ENCODE measurements at regions of chr11 and their contacts with region 1.

Region 1: GRCh38 chr11:695538-696248 is at the start of gene TMEM80:
- DNase-seq: peak; percentile 97 to 99 (median 99)
- H3K4me3 ChIP-seq: peak within 1 kb of the TSS; percentile 69 to 82
- H3K4me3 Mint-ChIP-seq: peak within 1 kb of the TSS; percentile 87 to 90 (median 88)
- H3K27ac ChIP-seq: peak within 1 kb of the TSS; percentile 98
- H3K27ac Mint-ChIP-seq: peak within 1 kb of the TSS; percentile 91 to 97 (median 95)
- H3K4me1 ChIP-seq: peaks cover 57% of the 10 kb centered on the region
- H3K4me1 Mint-ChIP-seq: peaks cover 31 to 58% (median 46%) of the 10 kb centered on the region in 4 donors
- H3K27me3 ChIP-seq: no peaks in the 10 kb centered on the region
- H3K27me3 Mint-ChIP-seq: no peaks in the 10 kb centered on the region
- total RNA-seq, gene TMEM80: 44.7 to 47.3 TPM

Region 2: DNA sequence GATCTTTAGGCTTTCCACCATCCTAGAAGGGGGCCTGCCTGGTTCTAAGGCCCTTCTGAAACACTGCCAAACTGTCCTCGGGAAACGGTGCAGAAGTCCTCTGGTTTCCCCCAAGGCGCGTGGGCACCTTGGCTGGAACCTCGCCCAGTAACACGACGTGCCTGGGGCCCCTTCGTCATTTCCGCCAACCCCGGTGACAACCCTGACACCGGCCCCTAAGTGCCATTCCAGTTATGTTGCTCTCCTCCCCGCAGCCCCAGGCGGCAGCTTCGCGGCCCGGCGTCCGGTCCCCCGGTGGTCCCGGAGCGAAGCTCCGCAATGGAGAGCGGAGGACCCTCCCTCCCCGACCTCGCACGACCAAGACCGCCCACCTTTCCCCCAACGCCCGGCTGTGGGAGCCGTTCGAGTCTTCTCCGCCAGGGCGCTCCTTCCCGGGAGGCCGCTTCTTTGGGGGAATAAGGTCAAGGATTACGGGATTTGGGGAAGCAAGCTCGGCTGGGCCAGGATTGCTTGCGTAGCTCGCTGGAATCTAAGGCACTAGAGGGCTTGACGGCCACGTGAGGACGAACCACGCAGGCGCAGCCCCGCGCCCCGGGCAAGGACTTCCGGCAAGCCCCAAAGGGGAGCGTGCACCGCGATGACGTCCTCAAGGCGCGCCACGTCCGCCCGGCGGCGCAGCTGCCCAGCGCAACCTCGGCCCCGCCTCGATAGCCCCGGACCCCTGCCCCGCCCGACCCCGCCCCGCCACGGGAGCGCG is 189.3 kb before region 1 on chr11:
- CTCF ChIA-PET with region 1: no interaction called
- POLR2A ChIA-PET with region 1: interaction called, 6 read pairs
- intact Hi-C with region 1: loop called (anchors 2 kb)
- DNase-seq: peak; percentile 94 to 98 (median 97)
- H3K4me3 ChIP-seq: peak overlapping the region; percentile 91 to 99
- H3K4me3 Mint-ChIP-seq: peak overlapping the region; percentile 95 to 100 (median 98)
- H3K27ac ChIP-seq: peak overlapping the region; percentile 100
- H3K27ac Mint-ChIP-seq: peak overlapping the region; percentile 100
- H3K4me1 ChIP-seq: peaks cover 35% of the 10 kb centered on the region
- H3K4me1 Mint-ChIP-seq: peaks cover 6 to 42% (median 25%) of the 10 kb centered on the region in 4 donors
- H3K27me3 ChIP-seq: no peaks in the 10 kb centered on the region
- H3K27me3 Mint-ChIP-seq: no peaks in the 10 kb centered on the region

Region 3: DNA sequence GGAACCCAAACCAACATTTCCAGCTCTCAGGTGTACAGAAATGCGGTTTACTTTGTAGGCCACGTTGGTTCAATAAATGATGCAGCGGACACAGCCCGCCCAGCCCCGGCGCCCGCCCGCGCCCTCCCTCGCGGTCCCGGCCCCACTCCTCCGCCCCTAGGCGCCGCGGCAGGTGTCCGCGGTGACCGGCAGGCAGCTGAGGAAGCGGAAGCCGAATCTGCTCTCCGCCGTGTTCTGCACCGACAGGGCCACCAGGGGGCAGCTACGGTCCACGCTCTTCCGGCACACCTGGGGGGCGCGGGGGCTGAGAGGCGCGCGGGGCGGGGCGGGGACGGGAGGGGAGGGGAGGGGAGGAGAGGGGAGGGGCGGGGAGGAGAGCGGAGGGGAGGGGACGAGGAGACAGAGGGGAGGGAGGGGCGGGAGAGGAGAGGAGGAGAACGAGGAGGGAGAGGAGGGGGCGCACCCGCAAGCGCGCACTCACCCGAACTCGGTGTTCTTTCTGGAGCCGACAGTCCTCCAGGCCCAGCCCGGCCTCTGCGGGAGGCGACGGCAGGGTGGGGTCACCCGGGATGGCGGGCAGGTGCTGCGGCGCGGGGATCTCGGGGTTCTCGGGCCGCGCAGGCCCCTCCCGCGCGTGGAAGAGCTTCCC is 140.7 kb before region 1 on chr11:
- CTCF ChIA-PET with region 1: interaction called, 15 read pairs
- POLR2A ChIA-PET with region 1: interaction called, 25 read pairs
- intact Hi-C with region 1: no loop called
- DNase-seq: peak; percentile 72 to 77 (median 74)
- H3K4me3 ChIP-seq: peak overlapping the region in 1 of 2 donors; percentile 43
- H3K4me3 Mint-ChIP-seq: peak overlapping the region in 6 of 8 donors; percentile 13 to 68 (median 58)
- H3K27ac ChIP-seq: peak overlapping the region; percentile 21
- H3K27ac Mint-ChIP-seq: peak overlapping the region in 1 of 7 donors; percentile 46
- H3K4me1 ChIP-seq: peaks cover 16% of the 10 kb centered on the region
- H3K4me1 Mint-ChIP-seq: peaks cover 3 to 12% (median 4%) of the 10 kb centered on the region in 4 donors
- H3K27me3 ChIP-seq: no peaks in the 10 kb centered on the region
- H3K27me3 Mint-ChIP-seq: no peaks in the 10 kb centered on the region

Region 4: DNA sequence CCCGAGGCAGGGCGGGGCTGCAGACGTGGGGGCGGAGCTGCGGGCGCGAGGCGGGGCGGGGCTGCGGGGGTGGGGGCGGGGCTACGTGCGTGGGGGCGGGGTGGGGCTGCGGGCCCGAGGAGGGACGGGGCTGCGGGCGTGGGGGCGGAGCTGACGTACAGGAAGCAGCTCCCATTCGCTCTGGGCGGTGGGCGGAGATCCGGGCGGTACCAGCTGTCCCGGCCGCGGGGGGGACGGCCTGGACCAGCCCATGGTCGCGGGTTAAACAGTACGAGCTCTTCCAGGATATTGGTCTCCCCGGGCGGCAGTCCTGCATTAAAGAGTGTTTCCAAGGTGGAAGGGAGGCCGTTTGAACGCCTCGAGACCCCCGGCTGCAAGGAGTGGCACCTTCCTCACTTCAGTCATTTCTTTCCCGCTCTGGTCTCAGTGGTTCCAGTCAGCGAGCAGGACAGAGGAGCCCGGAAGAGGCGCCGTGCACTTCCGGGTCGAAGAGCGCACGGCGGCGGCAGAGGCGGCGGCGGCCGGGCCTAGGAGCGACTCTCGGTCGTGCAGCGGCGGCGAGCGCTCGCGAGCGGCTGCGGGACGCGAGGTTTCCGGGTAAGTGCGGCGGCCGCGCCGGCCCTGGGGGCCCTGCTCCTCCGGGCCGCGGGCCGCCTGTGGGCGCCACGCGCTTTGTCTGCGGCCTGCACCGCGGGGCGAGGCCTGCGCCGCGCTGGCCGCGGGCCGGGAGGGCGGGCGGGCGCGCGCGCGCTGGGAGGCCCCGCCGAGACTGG is 119.5 kb before region 1 on chr11 and contains the start of gene PHRF1:
- CTCF ChIA-PET with region 1: no interaction called
- POLR2A ChIA-PET with region 1: interaction called, 32 read pairs
- intact Hi-C with region 1: loop called (anchors 1 kb)
- DNase-seq: peak; percentile 95 to 98 (median 97)
- H3K4me3 ChIP-seq: peak within 1 kb of the TSS; percentile 85 to 93
- H3K4me3 Mint-ChIP-seq: peak within 1 kb of the TSS; percentile 94 to 98 (median 98)
- H3K27ac ChIP-seq: peak within 1 kb of the TSS; percentile 77
- H3K27ac Mint-ChIP-seq: peak within 1 kb of the TSS; percentile 93 to 99 (median 99)
- H3K4me1 ChIP-seq: peaks cover 58% of the 10 kb centered on the region
- H3K4me1 Mint-ChIP-seq: peaks cover 31 to 56% (median 45%) of the 10 kb centered on the region in 4 donors
- H3K27me3 ChIP-seq: no peaks in the 10 kb centered on the region
- H3K27me3 Mint-ChIP-seq: peaks cover 0 to 11% of the 10 kb centered on the region in 2 donors
- total RNA-seq, gene PHRF1: 49.2 to 54.5 TPM

Region 5: DNA sequence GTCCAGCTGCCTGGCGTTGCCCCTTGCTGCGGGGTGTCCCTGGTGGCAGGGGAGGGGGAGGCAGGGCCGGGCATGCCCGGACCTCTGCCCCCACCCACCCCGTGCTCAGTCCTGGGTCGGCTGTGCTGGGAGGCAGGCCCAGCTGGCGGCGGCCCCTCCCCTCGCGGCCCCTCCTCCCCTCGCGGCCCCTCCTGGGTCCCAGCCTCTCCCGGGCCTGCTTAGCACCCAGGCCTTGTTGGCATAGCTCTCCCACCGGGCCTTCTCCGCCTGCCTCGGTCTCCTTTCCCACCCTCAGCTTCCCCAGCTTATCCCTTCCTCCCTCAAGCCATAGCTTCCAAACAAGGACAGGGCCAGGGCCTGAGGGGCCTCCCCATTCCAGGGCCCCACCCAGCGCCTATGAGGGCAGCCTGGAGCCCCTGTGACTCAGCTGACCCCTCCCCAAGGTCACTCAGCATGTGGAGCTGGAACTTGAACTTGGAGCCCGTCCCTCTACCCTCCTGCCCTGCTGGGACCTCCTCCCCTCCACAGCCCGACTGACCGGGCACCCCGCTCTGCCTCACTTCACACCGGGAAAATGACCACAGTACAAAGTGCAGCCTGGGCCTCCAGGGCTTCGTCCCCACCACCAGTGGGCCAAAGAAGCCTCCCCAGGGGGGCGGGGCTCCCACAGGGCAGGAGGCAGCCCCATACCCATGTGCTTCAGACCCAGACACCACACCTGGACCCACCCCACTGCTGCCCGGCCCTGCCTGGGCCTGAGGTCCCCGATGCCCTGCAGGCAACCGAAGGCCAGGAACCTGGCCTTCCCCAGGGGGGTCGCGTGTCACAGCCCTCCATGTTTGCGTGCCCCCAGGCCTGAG is 11.5 kb after region 1 on chr11:
- CTCF ChIA-PET with region 1: no interaction called
- POLR2A ChIA-PET with region 1: interaction called, 34 read pairs
- intact Hi-C with region 1: no loop called
- DNase-seq: peak in 1 of 5 donors; percentile 14
- H3K4me3 ChIP-seq: no peak overlapping the region
- H3K4me3 Mint-ChIP-seq: no peak overlapping the region
- H3K27ac ChIP-seq: no peak overlapping the region
- H3K27ac Mint-ChIP-seq: no peak overlapping the region
- H3K4me1 ChIP-seq: peaks cover 12% of the 10 kb centered on the region
- H3K4me1 Mint-ChIP-seq: peaks cover 0 to 6% (median 2%) of the 10 kb centered on the region in 4 donors
- H3K27me3 ChIP-seq: peaks cover 12% of the 10 kb centered on the region
- H3K27me3 Mint-ChIP-seq: peaks cover 4 to 10% of the 10 kb centered on the region in 2 donors

Region 6: DNA sequence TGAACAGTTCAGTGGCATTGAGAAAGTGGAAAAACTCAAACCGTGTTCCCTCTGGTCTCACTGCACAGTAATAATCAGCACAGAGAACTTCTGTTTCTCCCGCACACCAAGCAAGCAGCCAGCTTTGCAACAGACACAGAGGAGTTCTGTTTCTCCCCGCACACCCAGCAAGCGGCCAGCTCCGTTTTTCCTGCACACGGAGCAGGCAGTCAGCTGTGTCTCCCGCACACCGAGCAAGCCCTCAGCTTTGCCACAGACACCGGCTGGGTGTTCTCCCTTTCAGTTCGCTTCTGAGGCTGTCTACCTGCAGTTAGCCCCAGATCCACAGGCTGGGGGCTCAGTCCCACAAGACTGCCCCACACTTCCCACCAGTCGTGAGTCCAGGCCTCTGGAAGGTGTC is 41.7 kb after region 1 on chr11:
- CTCF ChIA-PET with region 1: no interaction called
- POLR2A ChIA-PET with region 1: interaction called, 13 read pairs
- intact Hi-C with region 1: no loop called
- DNase-seq: peak in 1 of 5 donors; percentile 13
- H3K4me3 ChIP-seq: no peak overlapping the region
- H3K4me3 Mint-ChIP-seq: peak overlapping the region in 7 of 8 donors; percentile 32 to 82 (median 76)
- H3K27ac ChIP-seq: no peak overlapping the region
- H3K27ac Mint-ChIP-seq: peak overlapping the region in 2 of 7 donors; percentile 70 to 77
- H3K4me1 ChIP-seq: peaks cover 13% of the 10 kb centered on the region
- H3K4me1 Mint-ChIP-seq: peaks cover 11 to 17% (median 15%) of the 10 kb centered on the region in 4 donors
- H3K27me3 ChIP-seq: no peaks in the 10 kb centered on the region
- H3K27me3 Mint-ChIP-seq: no peaks in the 10 kb centered on the region

Region 7: DNA sequence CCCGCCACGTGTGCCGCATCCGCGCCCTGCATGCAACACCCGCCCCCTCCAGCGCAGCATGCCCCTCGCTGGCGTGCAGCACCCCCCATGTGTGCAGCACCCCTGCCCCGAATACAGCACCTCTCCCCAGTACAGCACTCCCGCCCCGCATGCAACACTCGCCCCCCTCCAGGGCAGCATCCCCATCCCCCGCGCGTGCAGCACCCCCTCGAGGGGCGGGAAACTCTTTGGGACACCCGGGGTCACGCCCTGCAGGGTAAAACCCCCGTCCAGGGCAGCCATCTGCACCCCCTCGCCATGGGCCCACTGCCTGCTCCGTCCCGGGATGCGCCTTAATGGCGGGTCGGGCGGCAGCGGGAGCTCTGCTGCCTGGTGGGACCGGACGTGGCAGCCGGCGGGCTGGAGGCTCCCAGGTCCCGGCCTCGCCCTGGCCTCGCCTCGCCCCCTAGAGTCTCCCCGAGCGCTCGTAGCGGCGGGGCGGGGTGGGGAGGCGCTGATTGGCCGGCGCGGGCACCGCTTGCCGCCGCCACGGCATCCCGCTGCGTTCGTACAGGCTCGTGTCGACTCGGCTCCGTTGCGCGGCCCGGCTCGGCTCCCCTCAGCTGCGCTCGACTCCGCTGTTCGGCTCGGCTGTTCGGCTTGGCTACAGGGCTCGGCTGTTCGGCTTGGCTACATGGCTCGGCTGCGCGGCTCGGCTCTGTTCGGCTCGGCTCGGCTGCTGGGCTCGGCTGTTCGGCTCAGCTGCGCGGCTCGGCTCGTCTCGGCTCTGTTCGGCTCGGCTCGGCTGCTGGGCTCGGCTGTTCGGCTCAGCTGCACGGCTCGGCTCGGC is 693.6 kb after region 1 on chr11:
- CTCF ChIA-PET with region 1: no interaction called
- POLR2A ChIA-PET with region 1: no interaction called
- intact Hi-C with region 1: loop called (anchors 5 kb)
- DNase-seq: peak; percentile 97 to 98 (median 98)
- H3K4me3 ChIP-seq: peak overlapping the region in 1 of 2 donors; percentile 58
- H3K4me3 Mint-ChIP-seq: peak overlapping the region; percentile 61 to 86 (median 80)
- H3K27ac ChIP-seq: peak overlapping the region; percentile 61
- H3K27ac Mint-ChIP-seq: peak overlapping the region in 4 of 7 donors; percentile 18 to 59 (median 46)
- H3K4me1 ChIP-seq: peaks cover 9% of the 10 kb centered on the region
- H3K4me1 Mint-ChIP-seq: peaks cover 6 to 29% (median 12%) of the 10 kb centered on the region in 4 donors
- H3K27me3 ChIP-seq: peaks cover 8% of the 10 kb centered on the region
- H3K27me3 Mint-ChIP-seq: peaks cover 13 to 20% of the 10 kb centered on the region in 2 donors